Vagina (tissue), 2 donors: ENCODE measurements at regions of chr2 and their contacts with region 1.

Region 1: GRCh38 chr2:41853427-41854216 is 194.2 kb upstream of the PKDCC start:
- DNase-seq: no peak
- H3K4me3 ChIP-seq: no peak overlapping the region
- H3K27ac ChIP-seq: no peak overlapping the region
- H3K4me1 ChIP-seq: no peaks in the 10 kb centered on the region
- H3K27me3 ChIP-seq: no peaks in the 10 kb centered on the region
- CTCF ChIP-seq: peak; percentile 27 to 79 (median 58)
- POLR2A ChIP-seq: no peak

Region 2: DNA sequence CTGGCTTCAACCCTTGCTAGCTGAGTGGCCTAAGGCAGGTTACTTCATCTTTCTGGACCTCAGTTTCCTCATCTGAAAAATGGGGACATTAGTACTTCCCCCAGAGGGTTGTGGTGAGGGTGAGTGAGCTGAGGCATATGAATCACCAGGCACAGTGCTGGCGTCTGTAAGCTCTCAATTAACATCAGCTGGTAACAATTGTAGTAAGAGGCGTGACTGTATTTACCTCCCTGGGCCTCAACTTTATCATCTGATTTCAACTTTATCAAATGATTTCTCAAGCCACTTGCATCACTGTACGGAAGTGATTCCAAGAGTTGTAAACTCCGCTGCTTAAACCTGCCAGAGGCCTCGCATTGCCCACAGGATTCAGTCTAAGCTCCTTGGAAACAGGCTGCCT is 140.6 kb after region 1 on chr2:
- intact Hi-C with region 1: no loop called
- DNase-seq: no peak
- H3K4me3 ChIP-seq: no peak overlapping the region
- H3K27ac ChIP-seq: no peak overlapping the region
- H3K4me1 ChIP-seq: peaks cover 18% of the 10 kb centered on the region
- H3K27me3 ChIP-seq: no peaks in the 10 kb centered on the region
- CTCF ChIP-seq: no peak
- POLR2A ChIP-seq: no peak

Region 3: GRCh38 chr2:42086500-42086953 is 232.9 kb after region 1 on chr2:
- intact Hi-C with region 1: loop called (anchors 5 kb)
- DNase-seq: no peak
- H3K4me3 ChIP-seq: no peak overlapping the region
- H3K27ac ChIP-seq: no peak overlapping the region
- H3K4me1 ChIP-seq: peaks cover 16% of the 10 kb centered on the region
- H3K27me3 ChIP-seq: no peaks in the 10 kb centered on the region
- CTCF ChIP-seq: peak; percentile 45 to 90 (median 58)
- POLR2A ChIP-seq: no peak